ENCODE measurements at regions of chr7 and their contacts with region 1.

Region 1: GRCh38 chr7:130440527-130441365 is at the start of gene CEP41:
- DNase-seq: peak; percentile 98
- H3K4me3 Mint-ChIP-seq: peak within 1 kb of the TSS; percentile 98
- H3K27ac Mint-ChIP-seq: peak within 1 kb of the TSS; percentile 98
- H3K4me1 Mint-ChIP-seq: peaks cover 50% of the 10 kb centered on the region
- H3K27me3 Mint-ChIP-seq: no peaks in the 10 kb centered on the region
- total RNA-seq, gene CEP41: 16.0 to 18.2 TPM

Region 2: DNA sequence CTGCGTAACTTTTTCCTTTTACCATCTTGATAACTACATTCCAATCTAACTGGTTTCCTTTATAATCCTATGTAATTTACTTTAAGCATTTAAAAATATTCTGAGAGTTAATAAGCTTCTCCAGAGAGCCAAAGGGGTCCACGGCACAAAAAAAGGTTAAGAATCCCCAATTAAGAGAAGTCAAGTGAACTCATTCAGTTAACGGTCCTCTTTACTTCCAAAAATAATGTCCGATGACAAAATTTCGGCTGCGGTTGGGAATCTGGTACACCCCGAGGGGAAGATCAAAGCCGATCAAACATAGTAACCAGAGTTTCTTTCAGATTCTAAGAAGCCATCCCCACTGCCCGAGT is 390.0 kb before region 1 on chr7:
- CTCF ChIA-PET with region 1: interaction called, 3 read pairs
- intact Hi-C with region 1: loop called (anchors 1 kb)
- DNase-seq: no peak
- H3K4me3 Mint-ChIP-seq: peak overlapping the region; percentile 98
- H3K27ac Mint-ChIP-seq: peak overlapping the region; percentile 92
- H3K4me1 Mint-ChIP-seq: peaks cover 16% of the 10 kb centered on the region
- H3K27me3 Mint-ChIP-seq: no peaks in the 10 kb centered on the region

Region 3: DNA sequence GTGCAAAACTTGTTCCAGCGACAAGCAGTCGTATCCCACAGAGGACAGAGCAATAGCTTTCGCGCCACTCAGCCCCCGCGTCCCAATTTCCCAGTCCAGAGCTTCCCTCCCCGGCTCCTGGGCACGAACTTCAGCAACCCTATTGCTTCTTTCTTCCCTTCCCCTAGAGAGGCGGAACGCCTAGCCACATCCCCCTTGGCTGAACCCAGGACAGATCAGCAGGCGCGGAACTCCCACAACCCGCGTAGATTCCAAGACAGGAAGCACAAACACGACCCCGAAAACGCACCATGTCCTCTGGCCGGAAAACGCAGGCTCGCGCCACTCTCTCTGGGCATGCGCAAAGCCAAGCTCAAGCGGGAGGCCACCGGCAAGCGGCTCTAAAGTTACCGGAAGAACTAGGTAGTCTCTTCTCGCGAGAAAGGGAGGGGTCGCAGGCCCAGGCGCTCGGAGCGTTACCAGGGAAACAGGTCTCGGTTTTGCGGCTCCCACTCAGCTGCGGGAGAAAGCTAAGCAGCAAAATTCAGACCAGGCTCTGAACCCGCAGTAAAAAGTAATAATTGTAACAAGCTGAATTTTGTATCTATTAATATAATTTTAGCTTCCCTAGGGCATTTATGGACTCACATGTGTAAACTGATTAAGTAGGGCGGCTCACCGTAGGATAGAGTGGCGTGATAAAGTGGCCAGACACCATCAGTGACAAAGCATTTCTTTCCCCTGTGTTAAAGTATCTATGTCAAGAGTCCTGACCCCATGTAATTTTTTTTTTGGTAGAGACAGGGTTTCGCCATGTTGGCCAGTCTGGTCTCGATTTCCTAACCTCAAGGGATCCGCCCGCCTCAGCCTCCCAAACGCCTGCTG is 235.4 kb before region 1 on chr7 and contains the start of gene TMEM209:
- CTCF ChIA-PET with region 1: no interaction called
- intact Hi-C with region 1: loop called (anchors 2 kb)
- DNase-seq: peak; percentile 97
- H3K4me3 Mint-ChIP-seq: peak within 1 kb of the TSS; percentile 98
- H3K27ac Mint-ChIP-seq: peak within 1 kb of the TSS; percentile 98
- H3K4me1 Mint-ChIP-seq: peaks cover 33% of the 10 kb centered on the region
- H3K27me3 Mint-ChIP-seq: no peaks in the 10 kb centered on the region
- total RNA-seq, gene TMEM209: 36.0 to 37.3 TPM

Region 4: GRCh38 chr7:130365511-130366441 is 75.0 kb before region 1 on chr7:
- CTCF ChIA-PET with region 1: no interaction called
- intact Hi-C with region 1: loop called (anchors 5 kb)
- DNase-seq: no peak
- H3K4me3 Mint-ChIP-seq: no peak overlapping the region
- H3K27ac Mint-ChIP-seq: no peak overlapping the region
- H3K4me1 Mint-ChIP-seq: peaks cover 30% of the 10 kb centered on the region
- H3K27me3 Mint-ChIP-seq: no peaks in the 10 kb centered on the region

Region 5: GRCh38 chr7:130393101-130393561 is 47.6 kb before region 1 on chr7:
- CTCF ChIA-PET with region 1: no interaction called
- intact Hi-C with region 1: loop called (anchors 5 kb)
- DNase-seq: no peak
- H3K4me3 Mint-ChIP-seq: no peak overlapping the region
- H3K27ac Mint-ChIP-seq: no peak overlapping the region
- H3K4me1 Mint-ChIP-seq: peaks cover 20% of the 10 kb centered on the region
- H3K27me3 Mint-ChIP-seq: no peaks in the 10 kb centered on the region

Region 6: GRCh38 chr7:130421684-130422083 is 19.1 kb before region 1 on chr7:
- CTCF ChIA-PET with region 1: interaction called, 5 read pairs
- intact Hi-C with region 1: loop called (anchors 1 kb)
- DNase-seq: peak; percentile 65
- H3K4me3 Mint-ChIP-seq: peak overlapping the region; percentile 23
- H3K27ac Mint-ChIP-seq: peak overlapping the region; percentile 78
- H3K4me1 Mint-ChIP-seq: peaks cover 74% of the 10 kb centered on the region
- H3K27me3 Mint-ChIP-seq: no peaks in the 10 kb centered on the region

Region 7: DNA sequence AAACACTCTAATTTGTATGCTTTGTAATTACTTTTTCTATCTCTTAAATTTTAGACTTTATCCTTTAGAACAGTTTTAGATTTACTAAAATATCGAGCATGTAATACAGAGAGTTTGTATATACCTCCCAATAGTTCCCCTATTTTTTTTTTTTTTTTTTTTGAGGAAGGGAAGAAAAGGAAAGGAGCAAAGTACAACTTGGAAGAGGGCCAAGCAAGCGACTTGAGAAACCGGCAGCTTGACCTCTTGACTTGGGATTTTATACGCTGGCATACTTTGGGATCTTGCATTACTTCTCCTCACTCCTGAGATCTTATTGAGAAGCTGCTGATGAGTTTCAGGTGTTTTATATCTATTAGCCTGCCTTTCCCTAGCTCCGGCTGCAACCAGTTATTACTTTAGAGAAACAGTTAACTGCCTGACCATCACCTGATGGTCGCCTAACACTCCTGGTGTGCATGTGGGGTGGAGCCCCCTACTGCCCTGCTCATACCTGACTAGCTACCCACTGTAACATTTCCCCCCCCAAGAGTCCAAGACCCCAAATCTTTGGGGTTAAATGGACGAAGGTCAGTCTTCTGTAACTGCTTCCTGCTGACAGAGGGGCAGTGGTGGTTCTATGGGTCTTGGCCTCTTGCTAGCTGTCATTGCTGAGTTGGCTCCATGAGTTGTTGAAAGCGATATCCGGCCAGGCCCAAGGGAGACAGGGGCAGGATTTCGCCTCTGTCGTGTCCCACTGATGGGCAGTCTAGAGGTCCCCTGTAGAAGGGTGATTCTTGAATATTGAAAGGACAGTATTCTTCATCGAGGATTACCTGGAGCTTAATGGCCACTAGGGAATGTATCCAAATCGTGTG is 915.4 kb after region 1 on chr7:
- CTCF ChIA-PET with region 1: no interaction called
- intact Hi-C with region 1: no loop called
- DNase-seq: no peak
- H3K4me3 Mint-ChIP-seq: no peak overlapping the region
- H3K27ac Mint-ChIP-seq: no peak overlapping the region
- H3K4me1 Mint-ChIP-seq: peaks cover 71% of the 10 kb centered on the region
- H3K27me3 Mint-ChIP-seq: no peaks in the 10 kb centered on the region

Measured in activated naive CD4-positive, alpha-beta T cell treated with anti-CD3 and anti-CD28 coated beads for 36 hours (primary cell).